Tibial artery (tissue), 4 donors: ENCODE measurements at regions of chr3 and their contacts with region 1.

Region 1: DNA sequence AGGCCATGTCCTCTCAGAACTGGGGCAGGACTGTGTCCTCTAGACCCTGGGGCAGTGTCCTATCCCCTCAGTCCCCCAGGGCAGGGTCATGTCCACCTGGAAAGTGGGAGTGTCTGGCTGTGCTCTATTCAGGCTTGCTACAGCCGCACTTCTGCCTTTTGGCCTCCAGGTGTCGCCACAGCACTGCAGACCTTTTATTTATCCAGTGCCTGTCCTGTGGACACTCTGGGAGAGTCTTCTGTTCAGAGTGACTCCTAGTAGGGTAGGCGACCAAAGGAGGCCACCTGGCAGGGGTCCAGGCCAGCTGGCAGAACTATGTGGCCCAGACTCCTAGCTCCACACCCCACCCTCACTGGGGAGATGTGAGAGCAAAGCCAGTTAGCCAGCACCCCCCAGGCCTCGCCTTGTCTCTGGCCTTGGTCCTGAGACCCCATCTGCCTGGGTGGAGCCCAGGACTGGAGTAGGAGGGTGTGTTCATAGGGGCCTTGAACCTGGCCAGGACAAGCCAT is 3.9 kb downstream of the TMIE start:
- DNase-seq: peak; percentile 67 to 86
- H3K4me3 ChIP-seq: no peak overlapping the region
- H3K27ac ChIP-seq: no peak overlapping the region
- H3K4me1 ChIP-seq: peaks cover 0 to 19% (median 17%) of the 10 kb centered on the region in 4 donors
- H3K27me3 ChIP-seq: no peaks in the 10 kb centered on the region
- CTCF ChIP-seq: peak; percentile 95 to 98

Region 2: DNA sequence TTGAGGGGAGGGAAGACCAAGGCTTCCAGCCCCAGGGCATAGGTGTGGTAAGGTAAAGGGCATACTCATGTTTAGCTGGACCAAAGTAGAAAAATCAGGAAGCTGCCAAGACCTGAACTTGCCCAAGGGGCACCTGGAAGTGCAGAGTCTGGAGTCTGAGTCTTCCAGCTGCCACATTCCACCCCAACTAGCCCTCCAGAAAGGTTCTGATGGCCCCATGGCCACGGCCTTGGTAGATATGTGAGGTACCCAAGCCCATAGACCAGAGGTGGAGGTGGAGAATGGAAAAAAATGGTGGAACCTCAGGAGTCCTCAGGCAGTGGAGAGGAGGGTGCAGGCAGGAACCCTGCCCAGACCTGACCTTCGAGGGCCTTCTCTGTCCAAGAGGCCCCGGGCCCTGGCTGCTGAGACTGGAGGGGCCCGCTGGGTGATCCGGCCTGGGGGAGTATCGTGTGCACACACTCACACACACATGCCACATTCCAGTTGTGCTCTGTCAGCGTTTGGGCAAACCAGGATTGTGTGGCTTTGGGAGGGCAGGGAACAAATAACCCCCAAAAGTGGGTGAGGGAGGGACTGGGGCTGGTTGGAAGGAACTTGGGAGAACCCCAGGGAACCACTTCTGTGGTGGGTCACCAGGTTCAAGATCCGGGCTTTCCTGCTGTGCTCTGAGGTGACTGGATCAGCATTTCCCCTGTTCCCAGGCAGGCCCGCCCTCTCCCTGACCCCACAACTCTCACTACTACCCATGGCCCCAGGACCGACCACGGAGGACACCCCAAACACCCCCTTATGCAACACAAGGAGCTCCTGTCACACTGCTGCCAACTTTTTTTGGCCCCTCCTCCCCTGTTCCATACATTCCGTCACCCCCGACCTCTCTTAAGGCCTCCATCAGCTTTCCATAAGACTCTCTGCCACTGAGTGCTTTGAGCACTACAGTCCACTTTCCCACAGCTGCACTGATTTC is 146.6 kb after region 1 on chr3:
- intact Hi-C with region 1: loop called (anchors 10 kb)
- DNase-seq: peak in 1 of 2 donors; percentile 66
- H3K4me3 ChIP-seq: no peak overlapping the region
- H3K27ac ChIP-seq: no peak overlapping the region
- H3K4me1 ChIP-seq: peaks cover 0 to 15% (median 3%) of the 10 kb centered on the region in 4 donors
- H3K27me3 ChIP-seq: no peaks in the 10 kb centered on the region
- CTCF ChIP-seq: no peak

Region 3: GRCh38 chr3:46909535-46910442 is 204.7 kb after region 1 on chr3:
- intact Hi-C with region 1: loop called (anchors 2 kb)
- DNase-seq: peak; percentile 85 to 93
- H3K4me3 ChIP-seq: peak overlapping the region in 1 of 2 donors; percentile 13
- H3K27ac ChIP-seq: peak overlapping the region; percentile 63 to 72
- H3K4me1 ChIP-seq: peaks cover 6 to 37% (median 23%) of the 10 kb centered on the region in 4 donors
- H3K27me3 ChIP-seq: no peaks in the 10 kb centered on the region
- CTCF ChIP-seq: peak; percentile 84 to 95

Region 4: GRCh38 chr3:46998121-46998851 is 293.2 kb after region 1 on chr3:
- intact Hi-C with region 1: loop called (anchors 10 kb)
- DNase-seq: peak; percentile 53 to 81
- H3K4me3 ChIP-seq: no peak overlapping the region
- H3K27ac ChIP-seq: no peak overlapping the region
- H3K4me1 ChIP-seq: no peaks in the 10 kb centered on the region
- H3K27me3 ChIP-seq: no peaks in the 10 kb centered on the region
- CTCF ChIP-seq: peak; percentile 73 to 75

Region 5: GRCh38 chr3:47527952-47528718 is 823.1 kb after region 1 on chr3:
- intact Hi-C with region 1: no loop called
- DNase-seq: no peak
- H3K4me3 ChIP-seq: no peak overlapping the region
- H3K27ac ChIP-seq: no peak overlapping the region
- H3K4me1 ChIP-seq: no peaks in the 10 kb centered on the region
- H3K27me3 ChIP-seq: no peaks in the 10 kb centered on the region
- CTCF ChIP-seq: no peak